A549 (cell line): ENCODE measurements at regions of chr15 and their contacts with region 1.

Region 1: DNA sequence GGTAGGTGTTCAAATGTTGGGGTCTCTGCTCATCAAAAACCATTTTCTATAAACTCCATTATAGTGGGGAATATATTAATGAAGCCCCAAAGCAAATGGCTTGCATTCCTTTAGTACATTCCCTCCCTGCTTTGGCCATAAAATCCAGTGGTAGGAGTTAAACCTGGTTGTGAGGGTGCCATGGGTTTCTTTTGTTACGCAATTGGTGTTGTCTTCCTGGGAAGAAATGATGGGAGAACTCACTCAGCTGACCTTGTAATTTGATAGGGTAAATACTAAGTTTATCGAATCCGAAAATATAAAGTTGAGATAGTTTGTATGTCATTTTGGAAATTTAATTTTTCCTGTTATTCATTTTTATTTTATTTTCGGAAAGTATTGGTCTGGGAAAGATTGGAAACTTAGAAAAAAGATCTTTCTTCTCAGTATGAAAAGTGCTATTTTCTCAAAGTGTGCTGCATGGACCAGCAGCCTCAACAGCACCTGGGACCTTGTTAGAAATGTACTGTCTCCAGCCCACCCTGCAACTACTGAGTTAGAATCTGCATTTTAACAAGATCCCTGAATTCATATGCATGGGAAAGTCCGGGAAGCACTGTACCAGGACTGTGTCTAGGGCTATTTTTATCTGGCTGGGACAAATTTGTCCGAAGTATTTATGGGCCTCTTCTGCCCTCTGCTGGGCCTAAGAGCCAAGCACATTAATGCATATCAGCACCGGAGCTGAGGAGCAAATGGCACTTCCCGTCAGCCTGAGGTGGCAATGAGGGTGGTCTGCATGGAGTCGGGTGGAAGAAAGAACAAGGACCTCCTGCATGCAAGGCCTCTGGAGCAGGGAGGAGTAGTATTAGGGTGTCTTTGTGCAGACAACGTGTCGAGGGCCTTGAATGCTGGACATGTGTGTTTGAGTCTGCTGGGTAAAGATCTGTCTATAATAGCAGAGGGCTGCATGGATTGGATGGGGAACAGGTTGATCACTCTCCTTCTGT is 54.7 kb downstream of the FAM81A start:
- DNase-seq: peak; percentile 61 to 81
- ATAC-seq: peak; percentile 95 to 98
- H3K4me3 ChIP-seq: no peak overlapping the region
- H3K27ac ChIP-seq: peak overlapping the region; percentile 55 to 71
- H3K4me1 ChIP-seq: peaks cover 9% of the 10 kb centered on the region
- CTCF ChIP-seq: peak; percentile 98
- EP300 ChIP-seq: no peak
- POLR2A ChIP-seq: no peak
- RAD21 ChIP-seq: peak; percentile 100

Region 2: DNA sequence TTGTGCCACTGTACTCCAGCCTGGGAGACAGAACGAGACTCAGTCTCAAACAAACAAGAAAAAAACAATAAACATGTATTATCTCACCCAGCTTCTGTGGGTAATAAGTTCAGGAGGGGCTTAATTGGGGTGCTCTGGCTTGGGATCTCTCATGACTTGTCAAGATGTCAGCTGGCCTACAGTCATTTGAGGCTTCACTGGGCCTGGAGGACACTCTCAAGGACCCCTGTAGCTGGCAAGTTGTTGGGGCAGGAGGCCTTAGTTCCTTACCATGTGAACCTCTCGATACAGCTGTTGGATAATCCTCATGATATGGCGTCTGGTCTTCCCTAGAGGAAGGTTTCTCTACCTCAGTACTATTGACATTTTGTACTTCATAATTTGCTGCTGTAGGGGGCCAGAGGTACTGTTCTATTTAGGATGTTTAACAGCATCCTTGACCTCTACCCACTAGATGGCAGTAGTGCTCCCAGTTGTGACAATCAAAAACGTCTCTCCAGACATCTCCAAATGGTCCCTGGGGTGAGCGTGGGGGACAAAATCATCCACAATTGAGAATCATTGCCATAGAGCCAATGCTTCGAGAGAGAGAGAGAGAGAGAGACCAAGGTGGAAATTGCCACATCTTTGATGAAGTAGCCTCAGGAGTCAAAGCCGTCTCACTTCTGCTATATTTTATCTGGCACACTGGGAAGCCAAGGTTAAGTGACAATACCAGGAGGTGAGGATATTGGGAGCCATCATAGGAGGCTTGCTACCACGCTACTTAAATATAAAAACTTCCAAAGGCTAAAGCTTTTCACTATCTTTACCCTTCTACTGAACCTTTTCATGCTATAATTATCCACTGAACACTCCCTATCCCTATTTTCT is 535.3 kb before region 1 on chr15:
- CTCF ChIA-PET with region 1: interaction called, 17 read pairs
- POLR2A ChIA-PET with region 1: no interaction called
- DNase-seq: peak; percentile 85 to 88
- ATAC-seq: peak; percentile 97 to 99
- H3K4me3 ChIP-seq: no peak overlapping the region
- H3K27ac ChIP-seq: no peak overlapping the region
- H3K4me1 ChIP-seq: peaks cover 12% of the 10 kb centered on the region; the same call in 2 of the 3 replicates
- CTCF ChIP-seq: peak; percentile 93
- EP300 ChIP-seq: no peak
- POLR2A ChIP-seq: no peak
- RAD21 ChIP-seq: peak; percentile 79 to 82

Region 3: GRCh38 chr15:59104912-59105732 is 387.6 kb before region 1 on chr15 and contains the start of gene CCNB2:
- CTCF ChIA-PET with region 1: interaction called, 32 read pairs
- POLR2A ChIA-PET with region 1: no interaction called
- DNase-seq: peak; percentile 96 to 99
- ATAC-seq: peak; percentile 97 to 99
- H3K4me3 ChIP-seq: peak within 1 kb of the TSS; percentile 82
- H3K27ac ChIP-seq: peak within 1 kb of the TSS; percentile 83 to 91
- H3K4me1 ChIP-seq: peaks cover 9% of the 10 kb centered on the region; the same call in 2 of the 3 replicates
- CTCF ChIP-seq: no peak
- EP300 ChIP-seq: no peak
- POLR2A ChIP-seq: peak; percentile 71
- RAD21 ChIP-seq: no peak
- polyA plus RNA-seq, gene CCNB2: 121 and 144 TPM in 2 replicates

Region 4: GRCh38 chr15:59160880-59161593 is 331.6 kb before region 1 on chr15:
- CTCF ChIA-PET with region 1: interaction called, 27 read pairs
- POLR2A ChIA-PET with region 1: no interaction called
- DNase-seq: peak; percentile 41 to 59
- ATAC-seq: peak; percentile 81 to 84
- H3K4me3 ChIP-seq: no peak overlapping the region
- H3K27ac ChIP-seq: peak overlapping the region in 1 of 2 experiments; percentile 22; a peak in 1 of 6 replicates
- H3K4me1 ChIP-seq: peaks cover 6% of the 10 kb centered on the region
- CTCF ChIP-seq: peak; percentile 62
- EP300 ChIP-seq: no peak
- POLR2A ChIP-seq: no peak
- RAD21 ChIP-seq: peak; percentile 76 to 87

Region 5: DNA sequence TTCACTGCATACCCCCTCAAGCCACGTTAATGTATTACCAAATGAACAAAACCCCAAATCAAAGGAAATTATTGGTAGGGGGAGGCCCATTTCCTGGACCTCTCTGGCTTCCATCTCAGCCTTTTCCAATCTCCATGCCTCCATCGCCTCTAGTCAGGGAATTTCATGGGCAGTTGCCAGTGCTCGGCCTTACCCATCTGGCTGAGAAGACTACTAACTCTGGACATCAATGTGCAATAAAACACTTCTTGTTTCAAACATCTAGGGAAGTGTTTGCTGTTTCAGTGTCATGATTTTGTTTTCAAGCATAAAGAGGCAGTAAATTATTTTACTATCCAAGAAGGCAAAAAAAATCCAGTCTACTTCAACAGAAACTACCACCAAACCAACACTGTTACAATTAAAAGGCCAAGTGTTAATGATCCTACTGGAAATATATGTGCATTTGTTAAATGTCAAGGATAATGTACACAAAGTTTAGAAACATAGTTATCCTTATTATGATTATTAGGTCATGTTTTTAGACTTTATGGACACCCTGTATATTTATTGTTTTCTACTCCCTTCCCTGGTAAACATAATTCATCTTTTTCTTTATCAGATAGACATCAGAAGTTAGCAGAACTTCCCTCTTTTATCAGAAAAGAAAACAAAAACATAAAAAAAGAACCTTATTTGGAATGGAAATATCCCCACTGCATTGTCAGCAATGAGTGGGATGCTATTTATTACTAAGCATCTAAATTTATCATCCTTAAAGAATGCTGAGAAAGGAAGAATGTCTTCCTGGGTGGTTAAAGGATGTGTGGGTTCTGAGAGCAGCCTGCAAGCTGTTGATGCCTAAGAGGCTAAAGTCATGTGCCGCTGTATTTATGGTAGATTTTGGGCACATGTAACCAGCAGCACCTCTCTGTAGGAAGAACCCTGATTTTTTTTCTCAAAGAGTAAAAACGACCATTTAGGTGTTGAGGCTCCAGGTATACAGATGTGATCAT is 270.9 kb before region 1 on chr15:
- CTCF ChIA-PET with region 1: interaction called, 12 read pairs
- POLR2A ChIA-PET with region 1: no interaction called
- DNase-seq: no peak
- ATAC-seq: peak; percentile 32 to 40; a peak in 4 of 6 replicates
- H3K4me3 ChIP-seq: no peak overlapping the region
- H3K27ac ChIP-seq: peak overlapping the region in 1 of 2 experiments; percentile 20; a peak in 1 of 6 replicates
- H3K4me1 ChIP-seq: peaks cover 19% of the 10 kb centered on the region
- CTCF ChIP-seq: no peak
- EP300 ChIP-seq: no peak
- POLR2A ChIP-seq: no peak
- RAD21 ChIP-seq: no peak

Region 6: GRCh38 chr15:59372352-59373211 is 120.1 kb before region 1 on chr15 and contains the start of gene MYO1E:
- CTCF ChIA-PET with region 1: interaction called, 14 read pairs
- POLR2A ChIA-PET with region 1: no interaction called
- DNase-seq: peak; percentile 98 to 100
- ATAC-seq: peak; percentile 92 to 95
- H3K4me3 ChIP-seq: peak within 1 kb of the TSS; percentile 96
- H3K27ac ChIP-seq: peak within 1 kb of the TSS; percentile 91 to 92
- H3K4me1 ChIP-seq: peaks cover 49% of the 10 kb centered on the region
- CTCF ChIP-seq: no peak
- EP300 ChIP-seq: no peak
- POLR2A ChIP-seq: peak; percentile 98
- RAD21 ChIP-seq: peak; percentile 18 to 39; a peak in 2 of 5 replicates
- polyA plus RNA-seq, gene MYO1E: 451 and 497 TPM in 2 replicates

Region 7: DNA sequence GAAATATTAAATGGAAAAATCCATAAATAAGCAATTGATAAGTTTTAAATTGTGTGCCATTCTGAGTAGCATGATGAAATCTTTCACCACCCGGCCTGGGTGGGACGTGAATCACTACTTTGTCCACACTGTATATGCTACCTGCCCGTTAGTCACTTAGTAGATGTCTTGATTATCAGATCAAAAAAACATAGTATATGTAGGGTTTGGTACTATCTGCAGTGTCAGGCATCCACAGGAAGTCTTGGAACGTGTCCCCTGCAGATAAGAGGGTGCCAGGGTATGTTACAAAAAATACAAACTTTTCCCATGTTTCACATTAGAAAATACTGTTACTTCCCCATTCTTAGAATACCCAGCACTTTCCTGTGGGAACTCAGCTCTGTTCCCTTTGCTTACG is 19.5 kb before region 1 on chr15:
- CTCF ChIA-PET with region 1: interaction called, 16 read pairs
- POLR2A ChIA-PET with region 1: no interaction called
- DNase-seq: no peak
- ATAC-seq: no peak
- H3K4me3 ChIP-seq: no peak overlapping the region
- H3K27ac ChIP-seq: no peak overlapping the region
- H3K4me1 ChIP-seq: no peaks in the 10 kb centered on the region
- CTCF ChIP-seq: no peak
- EP300 ChIP-seq: no peak
- POLR2A ChIP-seq: no peak
- RAD21 ChIP-seq: no peak